ENCODE measurements at regions of chr5 and their contacts with region 1.

Region 1: DNA sequence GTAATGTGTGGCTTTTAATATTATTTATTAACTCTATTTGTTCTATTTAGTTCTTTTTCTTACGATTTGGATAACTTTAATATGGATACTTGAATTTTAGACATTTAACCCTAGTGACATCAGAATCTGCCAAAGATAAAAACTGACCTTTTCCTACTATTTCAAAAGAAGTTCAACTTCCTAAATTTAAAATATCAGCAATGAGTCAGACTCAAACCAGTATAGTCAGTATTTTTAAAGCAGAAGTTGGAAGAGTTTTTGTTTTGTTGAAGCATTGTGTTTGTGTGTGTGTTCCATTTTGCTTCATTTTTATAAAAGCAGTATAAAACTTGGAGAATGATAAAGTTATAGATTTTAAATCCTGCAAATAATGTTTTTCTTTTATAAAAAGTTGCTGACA is 251.8 kb upstream of the RASA1 start:
- DNase-seq: no peak
- H3K4me3 ChIP-seq: no peak overlapping the region
- H3K27ac ChIP-seq: peak overlapping the region; percentile 1
- H3K4me1 ChIP-seq: peaks cover 11% of the 10 kb centered on the region
- H3K27me3 ChIP-seq: no peaks in the 10 kb centered on the region
- CTCF ChIP-seq: no peak

Region 2: GRCh38 chr5:86572825-86573517 is 442.9 kb before region 1 on chr5:
- intact Hi-C with region 1: no loop called
- DNase-seq: no peak
- H3K4me3 ChIP-seq: no peak overlapping the region
- H3K27ac ChIP-seq: no peak overlapping the region
- H3K4me1 ChIP-seq: no peaks in the 10 kb centered on the region
- H3K27me3 ChIP-seq: no peaks in the 10 kb centered on the region
- CTCF ChIP-seq: no peak

Region 3: GRCh38 chr5:86880785-86881492 is 135.0 kb before region 1 on chr5:
- intact Hi-C with region 1: loop called (anchors 10 kb)
- DNase-seq: no peak
- H3K4me3 ChIP-seq: no peak overlapping the region
- H3K27ac ChIP-seq: no peak overlapping the region
- H3K4me1 ChIP-seq: peaks cover 9% of the 10 kb centered on the region
- H3K27me3 ChIP-seq: no peaks in the 10 kb centered on the region
- CTCF ChIP-seq: peak; percentile 68

Region 4: DNA sequence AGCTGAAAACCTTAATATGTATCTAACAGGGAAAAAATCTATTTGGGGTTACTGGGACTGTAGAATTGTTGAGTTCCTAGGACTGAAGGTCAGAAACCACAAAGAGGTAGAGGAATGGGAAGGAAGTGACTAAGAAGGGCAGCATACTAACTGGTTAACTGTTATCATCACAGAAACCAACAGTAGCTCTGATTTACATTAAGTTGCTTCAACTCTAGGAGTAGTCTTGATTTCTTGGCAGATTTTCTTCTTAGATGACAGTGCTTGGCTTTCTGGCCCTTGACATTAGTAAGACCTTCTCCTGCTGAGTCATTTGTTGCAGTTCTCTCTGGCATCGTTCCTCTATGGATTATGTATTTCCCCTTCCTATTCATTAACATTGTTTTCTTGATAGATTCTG is 135.6 kb after region 1 on chr5:
- intact Hi-C with region 1: no loop called
- DNase-seq: no peak
- H3K4me3 ChIP-seq: no peak overlapping the region
- H3K27ac ChIP-seq: no peak overlapping the region
- H3K4me1 ChIP-seq: no peaks in the 10 kb centered on the region
- H3K27me3 ChIP-seq: no peaks in the 10 kb centered on the region
- CTCF ChIP-seq: no peak

Measured in left ventricle myocardium inferior (tissue), 1 donor.